ENCODE measurements at regions of chr5 and their contacts with region 1.

Region 1: GRCh38 chr5:171418316-171418981 is 998 bp upstream of the FGF18 start:
- DNase-seq: peak; percentile 70 to 87
- H3K4me3 ChIP-seq: peak overlapping the region; percentile 64; the same call in 1 of the 2 replicates
- H3K27ac ChIP-seq: no peak overlapping the region
- H3K4me1 ChIP-seq: 0 out of 2 replicates have a peak, but pooled peaks cover 7% of the 10 kb centered on the region
- H3K27me3 ChIP-seq: no peaks in the 10 kb centered on the region
- CTCF ChIP-seq: peak; percentile 93

Region 2: DNA sequence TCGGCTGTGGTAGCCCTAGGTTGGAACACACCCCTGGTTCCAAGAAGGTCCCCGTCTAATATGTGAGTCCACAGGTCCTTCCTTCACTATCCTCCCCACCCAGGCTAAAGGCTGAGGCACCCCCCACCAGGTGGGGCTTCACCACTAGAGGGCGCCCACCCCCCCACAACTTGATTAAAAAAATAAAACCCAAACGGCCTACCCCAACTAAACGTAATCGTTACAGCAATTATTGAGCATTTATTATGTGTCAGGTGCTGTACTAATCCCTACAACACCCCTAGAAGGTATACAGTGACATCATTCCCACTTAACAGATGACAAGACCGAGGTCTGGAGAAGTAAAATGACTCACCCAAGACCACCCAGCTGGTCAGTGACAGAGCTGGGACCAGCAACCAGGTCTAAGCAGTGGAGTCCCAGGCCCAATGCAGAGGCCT is 66.0 kb after region 1 on chr5:
- CTCF ChIA-PET with region 1: no interaction called
- POLR2A ChIA-PET with region 1: no interaction called
- intact Hi-C with region 1: loop called (anchors 5 kb)
- DNase-seq: peak in 1 of 2 experiments; percentile 46
- H3K4me3 ChIP-seq: no peak overlapping the region
- H3K27ac ChIP-seq: no peak overlapping the region
- H3K4me1 ChIP-seq: 0 out of 2 replicates have a peak, but pooled peaks cover 4% of the 10 kb centered on the region
- H3K27me3 ChIP-seq: no peaks in the 10 kb centered on the region
- CTCF ChIP-seq: peak; percentile 97

Region 3: GRCh38 chr5:171534043-171534895 is 115.8 kb after region 1 on chr5:
- CTCF ChIA-PET with region 1: interaction called, 12 read pairs
- POLR2A ChIA-PET with region 1: no interaction called
- intact Hi-C with region 1: no loop called
- DNase-seq: peak; percentile 70 to 85
- H3K4me3 ChIP-seq: no peak overlapping the region
- H3K27ac ChIP-seq: peak overlapping the region; percentile 72
- H3K4me1 ChIP-seq: peaks cover 56% of the 10 kb centered on the region
- H3K27me3 ChIP-seq: no peaks in the 10 kb centered on the region
- CTCF ChIP-seq: no peak

Region 4: GRCh38 chr5:171660434-171660833 is 242.0 kb after region 1 on chr5:
- CTCF ChIA-PET with region 1: no interaction called
- POLR2A ChIA-PET with region 1: no interaction called
- intact Hi-C with region 1: no loop called
- DNase-seq: no peak
- H3K4me3 ChIP-seq: no peak overlapping the region
- H3K27ac ChIP-seq: no peak overlapping the region
- H3K4me1 ChIP-seq: no peaks in the 10 kb centered on the region
- H3K27me3 ChIP-seq: no peaks in the 10 kb centered on the region
- CTCF ChIP-seq: no peak

Region 5: GRCh38 chr5:171850324-171851285 is 432.2 kb after region 1 on chr5:
- CTCF ChIA-PET with region 1: interaction called, 3 read pairs
- POLR2A ChIA-PET with region 1: no interaction called
- intact Hi-C with region 1: loop called (anchors 2 kb)
- DNase-seq: no peak
- H3K4me3 ChIP-seq: no peak overlapping the region
- H3K27ac ChIP-seq: no peak overlapping the region
- H3K4me1 ChIP-seq: no peaks in the 10 kb centered on the region
- H3K27me3 ChIP-seq: no peaks in the 10 kb centered on the region
- CTCF ChIP-seq: peak; percentile 56

Region 6: DNA sequence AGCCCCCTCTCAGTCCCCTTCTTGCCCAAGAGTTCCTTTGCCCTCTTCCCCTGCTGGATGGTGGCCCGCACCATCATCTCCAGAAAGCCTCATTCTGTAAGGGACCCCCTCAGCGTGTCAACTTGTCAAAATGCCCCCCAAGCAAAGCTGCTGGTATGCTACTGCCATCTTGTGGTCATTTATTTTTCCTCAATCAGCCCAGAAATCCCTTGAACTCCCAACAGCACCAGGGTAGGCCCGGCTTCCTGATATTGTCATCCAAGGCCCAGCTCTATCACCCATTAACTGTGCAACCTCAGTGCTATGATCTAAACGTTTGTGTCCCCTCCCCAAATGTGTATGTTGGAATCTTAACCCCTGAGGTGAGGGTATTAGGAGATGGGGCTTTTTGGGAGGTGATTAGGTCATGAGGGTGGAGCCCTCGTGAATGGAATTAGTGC is 641.2 kb after region 1 on chr5:
- CTCF ChIA-PET with region 1: no interaction called
- POLR2A ChIA-PET with region 1: no interaction called
- intact Hi-C with region 1: loop called (anchors 10 kb)
- DNase-seq: no peak
- H3K4me3 ChIP-seq: no peak overlapping the region
- H3K27ac ChIP-seq: no peak overlapping the region
- H3K4me1 ChIP-seq: no peaks in the 10 kb centered on the region
- H3K27me3 ChIP-seq: no peaks in the 10 kb centered on the region
- CTCF ChIP-seq: peak; percentile 72

Region 7: GRCh38 chr5:172255444-172255843 is 837.0 kb after region 1 on chr5:
- CTCF ChIA-PET with region 1: no interaction called
- POLR2A ChIA-PET with region 1: interaction called, 11 read pairs
- intact Hi-C with region 1: no loop called
- DNase-seq: no peak
- H3K4me3 ChIP-seq: no peak overlapping the region
- H3K27ac ChIP-seq: no peak overlapping the region
- H3K4me1 ChIP-seq: no peaks in the 10 kb centered on the region
- H3K27me3 ChIP-seq: no peaks in the 10 kb centered on the region
- CTCF ChIP-seq: no peak

Measured in PC-9 (cell line).